ENCODE measurements at regions of chr5 and their contacts with region 1.

Region 1: DNA sequence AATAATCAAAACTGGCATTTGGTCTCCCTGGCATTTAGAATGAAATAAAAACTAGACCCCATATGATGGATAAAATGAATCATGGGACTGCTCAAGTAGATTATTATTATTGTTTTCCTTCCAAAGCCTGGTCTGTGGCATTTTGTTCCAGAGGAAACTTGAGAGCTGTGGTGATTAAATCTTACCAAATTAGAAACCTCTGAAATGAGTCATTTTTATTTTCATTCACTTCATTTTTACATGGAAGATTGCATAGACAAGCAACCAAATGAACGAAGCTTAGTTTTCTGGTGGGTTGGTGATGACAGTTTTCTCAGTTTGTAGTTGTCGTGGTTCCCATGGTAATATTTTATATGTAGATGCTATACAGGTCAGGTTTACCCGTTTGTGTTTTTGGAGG is 23.4 kb downstream of the PAM start:
- DNase-seq: peak; percentile 87
- H3K4me3 ChIP-seq: no peak overlapping the region
- H3K27ac ChIP-seq: peak overlapping the region; percentile 11
- H3K4me1 ChIP-seq: peaks cover 21% of the 10 kb centered on the region
- H3K27me3 ChIP-seq: no peaks in the 10 kb centered on the region
- CTCF ChIP-seq: no peak
- POLR2A ChIP-seq: no peak

Region 2: GRCh38 chr5:102715082-102715819 is 63.2 kb before region 1 on chr5:
- CTCF ChIA-PET with region 1: interaction called, 4 read pairs
- POLR2A ChIA-PET with region 1: no interaction called
- dilution Hi-C with region 1: no loop called
- intact Hi-C with region 1: loop called (anchors 2 kb)
- DNase-seq: peak; percentile 77
- H3K4me3 ChIP-seq: no peak overlapping the region
- H3K27ac ChIP-seq: no peak overlapping the region
- H3K4me1 ChIP-seq: peaks cover 15% of the 10 kb centered on the region
- H3K27me3 ChIP-seq: no peaks in the 10 kb centered on the region
- CTCF ChIP-seq: no peak
- POLR2A ChIP-seq: no peak

Region 3: DNA sequence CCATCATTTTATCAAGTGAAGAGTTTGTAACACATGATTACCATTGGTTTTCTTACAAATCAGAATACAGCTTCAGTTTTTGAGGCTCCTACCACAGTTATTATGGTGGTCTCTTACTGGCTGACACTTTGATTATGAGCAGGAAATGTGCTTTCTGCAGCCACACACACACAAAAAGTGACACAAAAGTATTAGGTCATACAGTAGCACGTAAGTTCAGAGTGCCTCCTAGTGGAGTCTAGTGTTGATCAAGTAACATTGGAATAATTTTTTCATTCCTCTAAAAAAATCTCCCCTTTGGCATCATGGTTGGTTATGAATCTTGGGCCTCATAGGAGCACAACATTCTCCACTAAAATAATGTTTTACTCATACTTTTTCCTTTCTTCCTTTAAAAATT is 14.2 kb after region 1 on chr5:
- CTCF ChIA-PET with region 1: interaction called, 18 read pairs
- POLR2A ChIA-PET with region 1: no interaction called
- dilution Hi-C with region 1: no loop called
- intact Hi-C with region 1: no loop called
- DNase-seq: peak; percentile 33
- H3K4me3 ChIP-seq: no peak overlapping the region
- H3K27ac ChIP-seq: no peak overlapping the region
- H3K4me1 ChIP-seq: no peaks in the 10 kb centered on the region
- H3K27me3 ChIP-seq: no peaks in the 10 kb centered on the region
- CTCF ChIP-seq: peak; percentile 17
- POLR2A ChIP-seq: no peak

Region 4: DNA sequence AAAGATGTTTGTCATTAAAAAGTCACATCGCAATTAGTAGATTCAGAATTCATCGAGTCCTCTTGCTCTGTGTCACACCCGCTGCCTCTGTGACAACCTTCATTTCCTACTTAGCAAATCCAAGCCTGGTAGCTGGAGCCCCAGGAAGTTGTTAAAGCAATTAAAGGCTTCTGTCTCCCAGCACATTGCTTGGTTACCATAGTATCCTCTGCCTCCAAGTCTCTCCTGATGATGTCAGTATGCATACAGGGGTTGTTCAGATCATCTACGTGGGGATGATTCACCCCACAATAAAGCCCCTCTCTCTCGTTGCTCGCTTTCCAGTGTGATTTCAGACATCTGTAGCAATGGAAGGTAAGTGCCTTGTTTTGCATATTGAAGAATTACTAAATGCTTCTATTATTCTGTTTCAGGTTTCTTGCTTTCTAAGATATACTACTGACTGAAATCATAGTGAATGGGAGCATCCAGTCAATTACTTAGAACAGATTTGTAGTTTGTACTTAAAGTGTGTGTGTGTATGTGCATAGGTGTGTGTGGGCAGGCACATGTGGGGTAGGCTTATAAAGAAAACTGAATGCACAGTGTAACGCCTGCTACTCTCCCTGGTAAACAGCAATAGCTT is 29.5 kb after region 1 on chr5:
- CTCF ChIA-PET with region 1: no interaction called
- POLR2A ChIA-PET with region 1: no interaction called
- dilution Hi-C with region 1: no loop called
- intact Hi-C with region 1: no loop called
- DNase-seq: peak; percentile 14
- H3K4me3 ChIP-seq: no peak overlapping the region
- H3K27ac ChIP-seq: peak overlapping the region; percentile 16
- H3K4me1 ChIP-seq: peaks cover 18% of the 10 kb centered on the region
- H3K27me3 ChIP-seq: no peaks in the 10 kb centered on the region
- CTCF ChIP-seq: no peak
- POLR2A ChIP-seq: no peak

Region 5: DNA sequence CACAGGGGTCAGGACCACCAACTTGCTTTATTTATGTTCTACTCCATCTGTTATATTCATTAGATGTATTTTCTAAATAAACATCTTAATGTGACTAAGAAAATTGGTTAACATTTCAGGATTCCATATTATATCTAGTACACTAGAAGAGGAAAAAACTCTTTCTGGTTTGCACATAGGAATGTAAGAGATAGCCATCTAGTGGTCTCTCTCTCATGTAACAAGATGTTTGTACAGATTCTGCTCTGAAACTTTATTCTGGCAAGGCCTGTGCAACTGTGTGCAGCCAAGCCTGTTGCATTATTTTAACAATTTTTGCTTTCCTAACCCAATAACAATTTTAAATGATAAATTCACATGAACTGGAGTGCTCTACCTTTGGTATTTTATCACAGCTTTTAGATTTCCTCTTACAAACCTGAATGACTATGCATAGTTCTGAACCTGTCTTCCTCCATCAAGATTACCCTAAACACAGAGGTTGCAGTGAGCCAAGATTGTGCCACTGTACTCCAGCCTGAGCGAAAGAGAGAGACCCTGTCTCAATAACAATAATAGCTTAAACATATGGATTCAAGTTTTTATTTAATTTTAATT is 193.3 kb after region 1 on chr5:
- CTCF ChIA-PET with region 1: interaction called, 29 read pairs
- POLR2A ChIA-PET with region 1: no interaction called
- dilution Hi-C with region 1: no loop called
- intact Hi-C with region 1: loop called (anchors 1 kb)
- DNase-seq: peak; percentile 40
- H3K4me3 ChIP-seq: no peak overlapping the region
- H3K27ac ChIP-seq: no peak overlapping the region
- H3K4me1 ChIP-seq: peaks cover 28% of the 10 kb centered on the region
- H3K27me3 ChIP-seq: no peaks in the 10 kb centered on the region
- CTCF ChIP-seq: peak; percentile 27 to 29
- POLR2A ChIP-seq: no peak

Region 6: DNA sequence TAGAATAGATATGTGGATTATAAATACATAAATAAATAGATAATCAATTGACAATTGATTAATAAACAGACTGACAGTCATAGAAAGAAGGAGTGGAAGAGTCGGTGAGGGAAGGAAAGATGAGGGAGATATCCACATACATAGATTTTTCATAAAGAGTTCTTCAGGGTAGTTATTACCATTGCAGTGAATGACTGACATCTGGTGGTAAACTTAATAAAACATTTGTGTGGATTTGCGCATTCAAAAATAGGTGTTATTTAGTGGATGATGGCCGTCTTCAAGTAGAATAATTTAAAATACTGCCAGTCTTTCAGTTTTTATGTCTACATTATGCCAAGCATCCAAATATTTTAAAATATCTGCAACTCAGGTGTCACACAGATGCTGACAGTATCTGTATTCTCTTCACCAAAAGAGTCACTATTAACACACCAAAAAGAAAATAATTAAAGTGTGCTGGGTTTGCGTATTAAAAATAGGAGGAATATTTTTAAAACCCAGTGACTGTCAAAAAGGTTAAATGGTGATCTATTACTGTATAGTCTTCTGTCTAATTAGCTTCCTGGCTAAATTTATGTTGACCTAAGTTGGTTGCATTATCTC is 262.7 kb after region 1 on chr5:
- CTCF ChIA-PET with region 1: interaction called, 12 read pairs
- POLR2A ChIA-PET with region 1: no interaction called
- dilution Hi-C with region 1: no loop called
- intact Hi-C with region 1: loop called (anchors 1 kb)
- DNase-seq: peak; percentile 71
- H3K4me3 ChIP-seq: no peak overlapping the region
- H3K27ac ChIP-seq: no peak overlapping the region
- H3K4me1 ChIP-seq: no peaks in the 10 kb centered on the region
- H3K27me3 ChIP-seq: no peaks in the 10 kb centered on the region
- CTCF ChIP-seq: peak; percentile 8 to 30
- POLR2A ChIP-seq: no peak

Measured in endothelial cell of umbilical vein (primary cell).